T-cell (primary cell): ENCODE measurements at regions of chr5 and their contacts with region 1.

Region 1: DNA sequence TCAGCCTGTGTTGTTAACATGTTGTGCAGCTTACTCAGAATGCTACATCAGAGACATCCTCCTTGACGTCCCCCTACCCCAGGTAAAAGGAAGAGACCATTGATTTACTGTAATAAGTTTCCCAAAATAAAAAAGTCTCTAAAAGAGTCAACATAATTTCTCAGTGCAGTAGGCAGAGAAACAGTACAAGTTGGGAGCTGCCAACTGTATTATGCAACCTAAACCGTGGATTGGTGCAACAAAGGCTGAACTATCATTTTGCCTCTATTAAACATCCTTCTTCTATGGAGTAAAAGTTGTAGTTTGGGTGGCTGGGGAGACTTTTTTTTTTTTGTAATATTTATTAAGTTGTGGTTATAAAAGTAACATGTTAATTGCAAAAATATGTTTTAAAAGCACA is 208.0 kb downstream of the NR3C1 start:
- DNase-seq: no peak
- ATAC-seq: no peak
- H3K4me3 ChIP-seq: no peak overlapping the region
- H3K4me3 Mint-ChIP-seq: no peak overlapping the region
- H3K27ac ChIP-seq: no peak overlapping the region
- H3K27ac Mint-ChIP-seq: no peak overlapping the region
- H3K4me1 ChIP-seq: no peaks in the 10 kb centered on the region
- H3K4me1 Mint-ChIP-seq: peaks cover 0 to 8% (median 0%) of the 10 kb centered on the region in 3 donors
- H3K27me3 ChIP-seq: no peaks in the 10 kb centered on the region
- H3K27me3 Mint-ChIP-seq: no peaks in the 10 kb centered on the region

Region 2: DNA sequence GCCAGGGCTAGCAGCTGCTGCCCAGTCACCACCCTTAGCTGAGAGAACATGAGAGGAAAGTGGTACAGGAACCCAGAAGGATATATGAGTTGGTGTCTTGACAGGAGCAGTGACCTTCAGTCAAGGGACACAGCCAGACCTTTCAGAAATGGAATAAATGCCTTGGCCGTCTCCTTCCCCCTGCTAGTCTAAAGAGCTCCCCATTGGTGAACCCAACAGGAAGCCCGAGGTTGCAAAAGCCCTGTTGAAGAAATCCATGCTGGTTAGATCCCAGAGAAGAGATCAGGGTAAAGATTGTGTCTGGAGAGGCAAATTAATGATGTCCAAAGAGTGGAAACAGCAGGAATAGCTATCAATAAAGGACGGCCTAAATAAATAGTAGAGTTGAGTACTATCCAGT is 36.5 kb before region 1 on chr5:
- CTCF ChIA-PET with region 1: interaction called in 1 of 2 experiments, 10 read pairs
- POLR2A ChIA-PET with region 1: no interaction called
- DNase-seq: no peak
- ATAC-seq: no peak
- H3K4me3 ChIP-seq: no peak overlapping the region
- H3K4me3 Mint-ChIP-seq: no peak overlapping the region
- H3K27ac ChIP-seq: no peak overlapping the region
- H3K27ac Mint-ChIP-seq: no peak overlapping the region
- H3K4me1 ChIP-seq: no peaks in the 10 kb centered on the region
- H3K4me1 Mint-ChIP-seq: no peaks in the 10 kb centered on the region
- H3K27me3 ChIP-seq: no peaks in the 10 kb centered on the region
- H3K27me3 Mint-ChIP-seq: no peaks in the 10 kb centered on the region